ENCODE measurements at regions of chr10 and their contacts with region 1.

Region 1: DNA sequence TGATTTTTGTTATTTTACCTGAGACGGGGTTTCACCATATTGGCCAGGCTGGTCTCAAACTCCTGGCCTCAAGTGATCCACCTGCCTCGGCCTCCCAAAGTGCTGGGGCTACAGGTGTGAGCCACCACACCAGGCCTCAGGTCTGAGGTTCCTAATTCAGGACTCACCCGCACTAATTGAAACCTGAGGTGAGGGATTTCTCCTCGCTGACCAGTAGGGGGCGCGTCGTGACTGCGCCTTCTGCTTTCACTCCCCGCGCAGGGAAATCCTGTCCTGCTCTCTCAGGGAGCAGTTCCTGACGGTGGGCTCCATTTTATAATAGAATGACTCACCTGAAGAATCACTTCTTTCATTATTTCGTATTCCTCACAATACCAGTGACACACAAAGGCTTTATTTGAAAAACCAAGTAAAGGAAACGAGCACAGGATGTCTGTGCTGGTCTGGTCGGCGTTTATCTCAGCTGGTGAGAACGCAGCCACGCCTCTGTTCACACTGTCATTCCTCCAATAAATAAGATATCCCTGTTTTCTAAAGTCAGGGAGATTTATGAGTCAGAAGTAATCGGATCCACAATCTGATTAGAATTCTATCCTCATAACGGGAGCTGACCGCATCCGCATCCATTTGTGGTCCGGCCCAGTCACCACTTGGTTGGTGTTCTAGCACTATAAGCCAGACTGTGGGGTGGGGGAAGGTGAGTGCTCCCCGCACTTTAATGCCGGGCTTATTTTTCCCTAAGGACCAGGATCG is 35.4 kb downstream of the BAG3 start:
- DNase-seq: peak; percentile 89
- ATAC-seq: peak; percentile 91
- H3K4me3 ChIP-seq: peak overlapping the region; percentile 30; the same call in 1 of the 2 replicates
- H3K27ac ChIP-seq: no peak overlapping the region
- H3K4me1 ChIP-seq: peaks cover 2% of the 10 kb centered on the region
- H3K27me3 ChIP-seq: no peaks in the 10 kb centered on the region
- CTCF ChIP-seq: peak; percentile 93
- POLR2A ChIP-seq: no peak
- RAD21 ChIP-seq: peak; percentile 91

Region 2: GRCh38 chr10:119725828-119726675 is 39.4 kb after region 1 on chr10 and contains the start of gene INPP5F:
- CTCF ChIA-PET with region 1: interaction called, 6 read pairs
- POLR2A ChIA-PET with region 1: no interaction called
- dilution Hi-C with region 1: no loop called
- in situ Hi-C with region 1: no loop called
- intact Hi-C with region 1: loop called (anchors 1 kb)
- DNase-seq: peak; percentile 96
- ATAC-seq: peak; percentile 98
- H3K4me3 ChIP-seq: peak within 1 kb of the TSS; percentile 84
- H3K27ac ChIP-seq: peak within 1 kb of the TSS; percentile 92
- H3K4me1 ChIP-seq: peaks cover 8% of the 10 kb centered on the region
- H3K27me3 ChIP-seq: no peaks in the 10 kb centered on the region
- CTCF ChIP-seq: 0 out of 2 replicates have a peak, but pooled peaks have one; percentile 24
- POLR2A ChIP-seq: no peak
- RAD21 ChIP-seq: peak; percentile 19
- total RNA-seq, gene INPP5F: 29.6 and 35.3 TPM in 2 replicates

Region 3: DNA sequence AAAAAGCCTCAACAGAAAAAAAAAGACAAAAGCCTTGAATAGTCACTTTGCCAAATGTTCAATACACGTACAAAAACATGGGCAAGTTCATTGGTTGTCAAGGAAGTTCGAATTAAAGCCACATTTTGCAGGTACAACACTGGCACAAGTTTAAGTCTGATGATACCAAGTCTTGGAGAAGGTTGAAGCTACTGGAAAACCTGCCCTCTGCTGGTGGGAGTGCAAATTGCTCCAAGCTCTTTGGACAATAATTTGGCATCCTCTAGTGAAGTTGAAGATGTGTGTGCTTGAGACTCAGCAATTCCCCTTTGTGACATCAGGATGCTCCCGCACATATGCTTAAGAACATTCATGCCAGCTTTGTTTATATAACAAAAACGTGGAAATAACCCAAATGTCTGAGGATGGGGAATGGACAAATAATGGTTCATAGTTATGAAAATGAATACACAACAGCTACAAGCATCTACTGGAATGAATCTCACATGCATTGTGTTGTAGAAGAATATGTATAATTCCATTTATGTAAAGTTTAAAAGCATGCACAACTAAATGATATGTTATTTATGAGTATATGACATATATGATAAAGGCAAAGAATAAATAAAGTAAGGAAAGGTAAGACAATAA is 650.4 kb after region 1 on chr10:
- CTCF ChIA-PET with region 1: no interaction called
- POLR2A ChIA-PET with region 1: no interaction called
- dilution Hi-C with region 1: no loop called
- in situ Hi-C with region 1: no loop called
- intact Hi-C with region 1: loop called (anchors 5 kb)
- DNase-seq: peak; percentile 11
- ATAC-seq: no peak
- H3K4me3 ChIP-seq: no peak overlapping the region
- H3K27ac ChIP-seq: no peak overlapping the region
- H3K4me1 ChIP-seq: no peaks in the 10 kb centered on the region
- H3K27me3 ChIP-seq: no peaks in the 10 kb centered on the region
- CTCF ChIP-seq: peak; percentile 42
- POLR2A ChIP-seq: no peak
- RAD21 ChIP-seq: peak; percentile 35; the same call in 1 of the 2 replicates

Region 4: DNA sequence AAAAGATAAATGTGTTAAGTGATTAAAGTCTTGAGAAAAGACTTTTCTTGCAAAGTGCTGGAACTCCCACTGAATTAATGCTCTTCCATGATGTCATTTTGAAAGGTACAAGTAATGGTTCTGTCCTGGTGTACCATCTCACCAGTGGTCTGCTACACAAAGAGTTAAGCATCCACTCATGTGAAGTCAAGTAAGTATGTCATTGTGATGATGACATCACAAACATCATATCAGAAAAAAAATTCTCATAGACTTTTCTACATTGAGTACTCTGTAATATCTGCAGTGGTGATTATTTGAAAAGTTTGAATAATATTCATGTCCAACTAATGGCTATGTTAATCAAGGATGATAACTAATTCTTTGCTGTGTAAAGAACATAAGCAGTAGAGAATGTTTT is 1187.1 kb after region 1 on chr10:
- CTCF ChIA-PET with region 1: no interaction called
- POLR2A ChIA-PET with region 1: no interaction called
- dilution Hi-C with region 1: no loop called
- in situ Hi-C with region 1: no loop called
- intact Hi-C with region 1: loop called (anchors 10 kb)
- DNase-seq: no peak
- ATAC-seq: no peak
- H3K4me3 ChIP-seq: no peak overlapping the region
- H3K27ac ChIP-seq: no peak overlapping the region
- H3K4me1 ChIP-seq: no peaks in the 10 kb centered on the region
- H3K27me3 ChIP-seq: no peaks in the 10 kb centered on the region
- CTCF ChIP-seq: no peak
- POLR2A ChIP-seq: no peak
- RAD21 ChIP-seq: no peak

Measured in IMR-90 (cell line).